Activated T-helper 2 cell treated with anti-CD3 and anti-CD28 coated beads, Interferon-gamma antibody, Interleukin-2, Interleukin-4, amounts not matched to agents 10 μg/mL and 5 μg/mL and 100 μg/mL, durations not matched to agents 14 hours and 24 hours and 36 hours (primary cell): ENCODE measurements at regions of chr5 and their contacts with region 1.

Region 1: GRCh38 chr5:54719384-54720283 is 202.1 kb downstream of the SNX18 start:
- DNase-seq: no peak
- H3K4me3 Mint-ChIP-seq: no peak overlapping the region
- H3K27ac Mint-ChIP-seq: peak overlapping the region; percentile 54
- H3K4me1 Mint-ChIP-seq: peaks cover 47% of the 10 kb centered on the region
- H3K27me3 Mint-ChIP-seq: no peaks in the 10 kb centered on the region

Region 2: GRCh38 chr5:54610197-54610944 is 109.3 kb before region 1 on chr5:
- intact Hi-C with region 1: loop called (anchors 5 kb)
- DNase-seq: peak; percentile 46
- H3K4me3 Mint-ChIP-seq: peak overlapping the region; percentile 38
- H3K27ac Mint-ChIP-seq: peak overlapping the region; percentile 58
- H3K4me1 Mint-ChIP-seq: peaks cover 29% of the 10 kb centered on the region
- H3K27me3 Mint-ChIP-seq: no peaks in the 10 kb centered on the region

Region 3: GRCh38 chr5:54646356-54647101 is 73.1 kb before region 1 on chr5:
- intact Hi-C with region 1: loop called (anchors 1 kb)
- DNase-seq: peak; percentile 74
- H3K4me3 Mint-ChIP-seq: peak overlapping the region; percentile 46
- H3K27ac Mint-ChIP-seq: peak overlapping the region; percentile 86
- H3K4me1 Mint-ChIP-seq: peaks cover 50% of the 10 kb centered on the region
- H3K27me3 Mint-ChIP-seq: no peaks in the 10 kb centered on the region

Region 4: DNA sequence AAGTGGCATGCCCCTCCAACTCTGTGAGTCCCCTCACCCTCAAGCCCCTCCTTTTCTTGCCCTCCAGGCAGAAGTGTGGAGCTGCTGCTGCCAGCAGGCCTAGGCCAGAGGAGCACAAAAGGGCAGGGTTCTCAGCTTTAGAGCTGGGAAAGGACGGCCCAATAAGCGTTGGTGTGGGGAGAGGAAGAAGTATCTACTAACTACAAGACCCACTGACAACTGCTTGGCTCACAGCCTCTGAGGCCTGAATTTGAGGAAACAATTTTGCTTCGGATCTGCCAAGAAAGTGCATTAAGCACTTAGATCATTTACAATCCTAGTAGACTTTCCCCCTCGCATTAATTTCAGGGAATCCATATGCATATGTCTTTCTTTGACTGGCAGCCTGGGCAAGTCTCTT is 22.7 kb before region 1 on chr5:
- intact Hi-C with region 1: no loop called
- DNase-seq: no peak
- H3K4me3 Mint-ChIP-seq: no peak overlapping the region
- H3K27ac Mint-ChIP-seq: no peak overlapping the region
- H3K4me1 Mint-ChIP-seq: peaks cover 7% of the 10 kb centered on the region
- H3K27me3 Mint-ChIP-seq: no peaks in the 10 kb centered on the region

Region 5: DNA sequence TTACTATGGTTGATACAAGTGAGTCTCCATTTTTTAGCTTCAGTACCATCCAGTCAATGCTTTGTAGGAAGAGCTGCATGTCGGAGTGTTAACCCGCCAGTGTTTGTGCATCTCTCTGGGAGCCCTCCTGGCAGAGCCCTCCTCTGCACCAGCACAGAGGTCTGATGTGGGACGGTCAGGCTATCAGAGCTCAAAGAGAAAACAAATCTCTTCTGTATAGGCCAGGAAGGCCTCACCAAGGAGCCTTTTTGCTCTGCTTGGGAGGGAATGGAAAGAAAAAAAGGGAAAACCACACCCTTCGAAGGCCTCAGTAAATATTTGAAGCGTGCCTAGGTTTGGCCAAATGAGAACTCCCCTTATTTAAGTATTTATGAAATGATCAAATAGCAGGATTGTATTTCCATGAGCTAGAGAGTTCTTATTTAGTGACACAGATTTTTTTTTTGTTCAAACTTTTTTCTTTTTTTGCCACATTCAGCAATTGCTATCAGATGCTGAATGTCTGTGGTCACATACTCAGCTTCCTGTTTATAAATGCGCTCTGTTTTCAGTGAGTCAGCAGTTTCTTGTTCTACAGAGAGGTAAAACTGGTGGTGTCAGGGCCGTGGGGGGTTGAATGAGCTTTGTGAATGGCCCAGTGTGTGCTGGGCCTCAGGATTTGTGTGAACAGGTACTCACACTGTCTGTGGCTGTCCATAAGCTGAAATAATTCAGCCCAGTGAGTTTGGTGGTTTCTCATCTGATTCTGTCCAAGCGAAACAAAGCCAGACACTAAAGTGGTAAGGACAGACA is 24.6 kb after region 1 on chr5:
- intact Hi-C with region 1: loop called (anchors 1 kb)
- DNase-seq: peak; percentile 58
- H3K4me3 Mint-ChIP-seq: no peak overlapping the region
- H3K27ac Mint-ChIP-seq: peak overlapping the region; percentile 59
- H3K4me1 Mint-ChIP-seq: peaks cover 26% of the 10 kb centered on the region
- H3K27me3 Mint-ChIP-seq: peaks cover 3% of the 10 kb centered on the region

Region 6: DNA sequence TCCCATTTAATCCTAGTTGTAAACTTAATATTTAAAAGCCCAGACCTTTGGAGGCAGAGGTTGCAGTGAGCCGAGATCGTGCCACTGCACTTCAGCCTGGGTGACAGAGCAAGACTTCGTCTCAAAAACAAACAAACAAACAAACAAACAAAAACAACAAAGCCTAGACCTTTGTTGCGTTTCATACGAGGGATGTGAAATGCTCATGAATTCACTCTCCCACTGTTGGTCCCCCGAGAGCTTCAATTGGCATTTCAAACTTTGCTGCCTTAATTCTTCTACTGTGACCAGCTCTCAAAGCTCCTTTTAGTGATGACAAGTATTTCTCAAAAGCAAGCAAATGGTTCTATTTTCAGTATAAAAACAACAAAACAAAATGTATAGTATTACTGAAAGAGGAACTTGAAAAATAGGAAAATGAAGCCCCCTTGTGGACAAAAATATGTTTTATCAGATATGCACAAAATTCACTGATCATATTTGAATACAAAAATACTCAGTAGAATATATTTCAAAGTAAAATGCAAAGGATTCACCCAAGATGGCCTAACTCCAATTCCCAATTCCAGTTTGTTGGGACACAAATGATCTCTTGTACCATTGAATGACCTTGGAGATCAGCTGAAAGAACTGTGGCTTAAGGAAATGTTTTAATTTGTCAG is 125.4 kb after region 1 on chr5:
- intact Hi-C with region 1: loop called (anchors 2 kb)
- DNase-seq: no peak
- H3K4me3 Mint-ChIP-seq: no peak overlapping the region
- H3K27ac Mint-ChIP-seq: no peak overlapping the region
- H3K4me1 Mint-ChIP-seq: peaks cover 15% of the 10 kb centered on the region
- H3K27me3 Mint-ChIP-seq: peaks cover 9% of the 10 kb centered on the region

Region 7: GRCh38 chr5:54867310-54867944 is 147.8 kb after region 1 on chr5:
- intact Hi-C with region 1: loop called (anchors 2 kb)
- DNase-seq: no peak
- H3K4me3 Mint-ChIP-seq: no peak overlapping the region
- H3K27ac Mint-ChIP-seq: no peak overlapping the region
- H3K4me1 Mint-ChIP-seq: peaks cover 29% of the 10 kb centered on the region
- H3K27me3 Mint-ChIP-seq: peaks cover 64% of the 10 kb centered on the region